GM12878 (cell line): ENCODE measurements at regions of chr9 and their contacts with region 1.

Region 1: DNA sequence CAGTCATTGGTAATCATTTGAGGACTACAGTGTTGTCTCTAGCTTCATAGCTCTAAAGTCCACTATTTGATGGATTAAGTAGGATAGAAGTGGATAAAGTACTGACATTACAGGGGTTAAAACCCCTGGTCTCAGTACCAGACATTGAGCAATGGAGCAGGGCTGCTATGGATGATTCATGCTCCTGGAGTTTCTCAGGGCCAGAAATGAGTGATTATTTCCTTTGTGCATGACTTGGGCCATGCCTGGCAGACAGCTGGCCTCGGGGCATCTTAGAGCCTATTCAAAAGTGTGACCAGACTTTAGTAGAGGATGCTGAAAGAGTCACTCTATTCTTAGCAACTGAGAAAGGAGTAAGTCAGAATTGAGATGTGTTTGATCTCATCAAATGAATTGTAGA is 350.7 kb upstream of the TLE4 start:
- DNase-seq: no peak
- ATAC-seq: no peak
- H3K4me3 ChIP-seq: no peak overlapping the region
- H3K27ac ChIP-seq: no peak overlapping the region
- H3K4me1 ChIP-seq: no peaks in the 10 kb centered on the region
- H3K27me3 ChIP-seq: no peaks in the 10 kb centered on the region
- CTCF ChIP-seq: no peak
- EP300 ChIP-seq: no peak
- POLR2A ChIP-seq: no peak
- RAD21 ChIP-seq: no peak

Region 2: GRCh38 chr9:78601957-78602565 is 619.0 kb before region 1 on chr9:
- CTCF ChIA-PET with region 1: no interaction called
- POLR2A ChIA-PET with region 1: no interaction called
- RAD21 ChIA-PET with region 1: no interaction called
- SMC1A ChIA-PET with region 1: no interaction called
- in situ Hi-C with region 1: no loop called
- intact Hi-C with region 1: loop called (anchors 10 kb)
- DNase-seq: no peak
- ATAC-seq: peak; percentile 57
- H3K4me3 ChIP-seq: no peak overlapping the region
- H3K27ac ChIP-seq: no peak overlapping the region
- H3K4me1 ChIP-seq: no peaks in the 10 kb centered on the region
- H3K27me3 ChIP-seq: no peaks in the 10 kb centered on the region
- CTCF ChIP-seq: peak; percentile 71 to 78 (median 75)
- EP300 ChIP-seq: no peak
- POLR2A ChIP-seq: no peak
- RAD21 ChIP-seq: peak; percentile 78

Region 3: DNA sequence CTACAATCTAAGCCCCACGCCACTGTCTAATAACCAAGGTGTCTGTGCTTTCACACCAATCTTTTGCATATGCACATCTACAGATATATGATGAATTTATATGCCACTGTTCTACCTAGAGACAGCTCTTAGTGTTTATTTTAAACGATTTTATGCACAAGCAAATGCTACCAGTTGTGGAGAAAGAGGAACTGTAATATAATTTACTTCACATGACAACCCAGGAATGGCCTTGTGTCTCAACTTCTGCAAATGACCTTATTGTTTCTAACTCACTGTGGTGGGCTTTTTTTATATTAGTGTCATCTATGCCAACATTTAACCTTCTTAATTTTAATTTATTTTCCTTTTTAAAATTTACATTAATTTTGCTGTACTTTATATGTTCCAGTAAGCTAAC is 180.4 kb before region 1 on chr9:
- CTCF ChIA-PET with region 1: no interaction called
- POLR2A ChIA-PET with region 1: no interaction called
- RAD21 ChIA-PET with region 1: no interaction called
- SMC1A ChIA-PET with region 1: no interaction called
- in situ Hi-C with region 1: no loop called
- intact Hi-C with region 1: no loop called
- DNase-seq: no peak
- ATAC-seq: no peak
- H3K4me3 ChIP-seq: no peak overlapping the region
- H3K27ac ChIP-seq: no peak overlapping the region
- H3K4me1 ChIP-seq: no peaks in the 10 kb centered on the region
- H3K27me3 ChIP-seq: no peaks in the 10 kb centered on the region
- CTCF ChIP-seq: no peak
- EP300 ChIP-seq: no peak
- POLR2A ChIP-seq: no peak
- RAD21 ChIP-seq: no peak

Region 4: DNA sequence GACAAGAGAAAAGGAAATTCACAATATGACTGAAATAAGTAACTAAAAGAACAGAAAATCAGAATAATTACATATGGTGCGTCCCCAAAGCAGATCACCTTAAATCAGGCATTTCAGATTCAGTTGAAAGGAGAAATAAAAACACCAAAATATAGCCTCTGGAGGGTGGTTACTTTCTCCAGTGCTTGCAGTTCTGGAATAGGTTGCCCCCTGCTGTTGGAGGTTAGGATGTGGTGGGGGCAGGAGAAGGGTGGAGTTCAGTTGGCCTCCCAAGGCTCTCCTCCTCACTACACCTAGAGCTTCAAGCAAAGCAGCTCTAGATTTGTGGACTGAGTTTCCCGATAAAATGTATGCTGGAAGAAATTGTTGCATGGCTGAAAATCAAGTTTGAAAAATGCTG is 12.5 kb after region 1 on chr9:
- CTCF ChIA-PET with region 1: no interaction called
- POLR2A ChIA-PET with region 1: no interaction called
- RAD21 ChIA-PET with region 1: no interaction called
- SMC1A ChIA-PET with region 1: no interaction called
- in situ Hi-C with region 1: no loop called
- intact Hi-C with region 1: no loop called
- DNase-seq: no peak
- ATAC-seq: peak; percentile 85
- H3K4me3 ChIP-seq: no peak overlapping the region
- H3K27ac ChIP-seq: no peak overlapping the region
- H3K4me1 ChIP-seq: no peaks in the 10 kb centered on the region
- H3K27me3 ChIP-seq: no peaks in the 10 kb centered on the region
- CTCF ChIP-seq: peak; percentile 38 to 45 (median 42); a peak in 5 of 6 replicates
- EP300 ChIP-seq: no peak
- POLR2A ChIP-seq: no peak
- RAD21 ChIP-seq: peak; percentile 48